K562 (cell line): ENCODE measurements at regions of chr6 and their contacts with region 1.

Region 1: GRCh38 chr6:107674995-107675738 is 148.9 kb downstream of the SCML4 start:
- DNase-seq: peak; percentile 76 to 79 (median 78)
- ATAC-seq: peak; percentile 98
- H3K4me3 ChIP-seq: no peak overlapping the region
- H3K27ac ChIP-seq: no peak overlapping the region
- H3K4me1 ChIP-seq: peaks cover 0 to 5% of the 10 kb centered on the region in 2 experiments; a peak in 2 of 5 replicates
- H3K27me3 ChIP-seq: peaks cover 16 to 39% of the 10 kb centered on the region in 2 experiments
- CTCF ChIP-seq: peak; percentile 88 to 93 (median 92)
- EP300 ChIP-seq: no peak
- POLR2A ChIP-seq: no peak
- RAD21 ChIP-seq: peak; percentile 79 to 91

Region 2: DNA sequence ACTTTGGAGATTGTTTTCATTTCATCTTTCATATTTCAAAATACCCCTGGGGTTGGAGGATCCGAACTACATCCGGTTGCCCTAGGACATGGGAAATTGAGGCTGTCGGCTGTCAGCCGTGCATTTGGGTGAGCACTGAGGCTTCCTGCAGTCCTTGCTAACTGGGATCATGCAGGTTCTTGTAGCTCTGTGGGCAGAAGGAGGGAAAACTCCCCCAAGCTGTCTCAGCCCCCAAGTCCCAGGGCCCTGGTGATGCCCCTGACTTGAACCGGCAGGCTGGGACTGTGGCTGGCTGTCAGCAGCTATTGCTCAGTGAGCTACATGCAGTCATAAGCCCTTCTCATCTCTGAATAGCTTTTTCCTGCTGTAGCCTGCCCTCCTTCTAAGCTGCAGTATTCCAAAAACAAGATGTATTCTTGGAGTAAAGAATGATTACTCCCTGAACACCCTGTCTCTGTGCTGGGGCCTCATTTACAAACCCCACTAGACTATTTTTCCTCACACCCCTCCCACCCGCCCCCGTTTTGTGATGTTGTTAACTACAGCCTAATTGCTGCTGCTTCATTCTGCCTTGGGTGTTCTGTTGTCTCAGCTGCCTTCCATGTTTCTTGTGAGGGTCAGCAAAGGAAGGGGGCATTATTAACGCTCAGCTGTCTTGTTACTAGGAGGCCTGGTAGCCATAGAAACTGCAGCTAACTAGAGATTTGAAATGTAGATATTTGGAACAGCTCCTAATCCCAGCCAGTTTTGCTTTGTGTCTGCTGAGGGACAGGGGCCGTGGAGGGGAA is 629.1 kb before region 1 on chr6:
- CTCF ChIA-PET with region 1: no interaction called
- POLR2A ChIA-PET with region 1: no interaction called
- in situ Hi-C with region 1: no loop called
- intact Hi-C with region 1: no loop called
- DNase-seq: no peak
- ATAC-seq: no peak
- H3K4me3 ChIP-seq: no peak overlapping the region
- H3K27ac ChIP-seq: no peak overlapping the region
- H3K4me1 ChIP-seq: no peaks in the 10 kb centered on the region; a peak in 1 of 5 replicates
- H3K27me3 ChIP-seq: no peaks in the 10 kb centered on the region
- CTCF ChIP-seq: no peak
- EP300 ChIP-seq: no peak
- POLR2A ChIP-seq: no peak
- RAD21 ChIP-seq: no peak

Region 3: GRCh38 chr6:107361753-107362604 is 313.2 kb before region 1 on chr6:
- CTCF ChIA-PET with region 1: no interaction called
- POLR2A ChIA-PET with region 1: no interaction called
- in situ Hi-C with region 1: no loop called
- intact Hi-C with region 1: no loop called
- DNase-seq: no peak
- ATAC-seq: no peak
- H3K4me3 ChIP-seq: no peak overlapping the region
- H3K27ac ChIP-seq: no peak overlapping the region
- H3K4me1 ChIP-seq: no peaks in the 10 kb centered on the region
- H3K27me3 ChIP-seq: no peaks in the 10 kb centered on the region
- CTCF ChIP-seq: no peak
- EP300 ChIP-seq: no peak
- POLR2A ChIP-seq: no peak
- RAD21 ChIP-seq: no peak

Region 4: GRCh38 chr6:107532706-107533105 is 142.5 kb before region 1 on chr6:
- CTCF ChIA-PET with region 1: no interaction called
- POLR2A ChIA-PET with region 1: no interaction called
- in situ Hi-C with region 1: no loop called
- intact Hi-C with region 1: no loop called
- DNase-seq: no peak
- ATAC-seq: no peak
- H3K4me3 ChIP-seq: no peak overlapping the region
- H3K27ac ChIP-seq: no peak overlapping the region
- H3K4me1 ChIP-seq: no peaks in the 10 kb centered on the region
- H3K27me3 ChIP-seq: peaks cover 8 to 13% of the 10 kb centered on the region in 2 experiments; a peak in 3 of 5 replicates
- CTCF ChIP-seq: no peak
- EP300 ChIP-seq: no peak
- POLR2A ChIP-seq: no peak
- RAD21 ChIP-seq: no peak

Region 5: GRCh38 chr6:107847844-107848802 is 173.0 kb after region 1 on chr6:
- CTCF ChIA-PET with region 1: interaction called, 4 read pairs
- POLR2A ChIA-PET with region 1: interaction called, 4 read pairs
- in situ Hi-C with region 1: no loop called
- intact Hi-C with region 1: loop called (anchors 1 kb)
- DNase-seq: peak; percentile 88 to 92 (median 90)
- ATAC-seq: peak; percentile 98
- H3K4me3 ChIP-seq: peak overlapping the region; percentile 30
- H3K27ac ChIP-seq: no peak overlapping the region
- H3K4me1 ChIP-seq: peaks cover 2 to 9% of the 10 kb centered on the region in 2 experiments; a peak in 3 of 5 replicates
- H3K27me3 ChIP-seq: peaks cover 4 to 20% of the 10 kb centered on the region in 2 experiments; a peak in 4 of 5 replicates
- CTCF ChIP-seq: peak; percentile 87 to 89 (median 89)
- EP300 ChIP-seq: no peak
- POLR2A ChIP-seq: peak; percentile 41; the same call in 1 of the 2 replicates
- RAD21 ChIP-seq: peak; percentile 76 to 81

Region 6: GRCh38 chr6:107866606-107867301 is 191.6 kb after region 1 on chr6:
- CTCF ChIA-PET with region 1: no interaction called
- POLR2A ChIA-PET with region 1: interaction called, 10 read pairs
- in situ Hi-C with region 1: no loop called
- intact Hi-C with region 1: loop called (anchors 5 kb)
- DNase-seq: peak in 2 of 4 experiments; percentile 31 to 47
- ATAC-seq: peak; percentile 80
- H3K4me3 ChIP-seq: no peak overlapping the region
- H3K27ac ChIP-seq: no peak overlapping the region
- H3K4me1 ChIP-seq: no peaks in the 10 kb centered on the region
- H3K27me3 ChIP-seq: no peaks in the 10 kb centered on the region
- CTCF ChIP-seq: peak; percentile 31 to 61 (median 58); a peak in 4 of 6 replicates
- EP300 ChIP-seq: no peak
- POLR2A ChIP-seq: no peak
- RAD21 ChIP-seq: peak in 1 of 2 experiments; percentile 56; a peak in 2 of 4 replicates

Region 7: GRCh38 chr6:107964671-107965340 is 289.6 kb after region 1 on chr6:
- CTCF ChIA-PET with region 1: no interaction called
- POLR2A ChIA-PET with region 1: no interaction called
- in situ Hi-C with region 1: no loop called
- intact Hi-C with region 1: loop called (anchors 10 kb)
- DNase-seq: peak; percentile 21 to 46 (median 44)
- ATAC-seq: peak; percentile 70
- H3K4me3 ChIP-seq: no peak overlapping the region
- H3K27ac ChIP-seq: no peak overlapping the region
- H3K4me1 ChIP-seq: peaks cover 0 to 8% of the 10 kb centered on the region in 2 experiments; a peak in 3 of 5 replicates
- H3K27me3 ChIP-seq: no peaks in the 10 kb centered on the region
- CTCF ChIP-seq: no peak
- EP300 ChIP-seq: no peak
- POLR2A ChIP-seq: no peak
- RAD21 ChIP-seq: no peak

Region 8: GRCh38 chr6:108039681-108040080 is 364.5 kb after region 1 on chr6:
- CTCF ChIA-PET with region 1: no interaction called
- POLR2A ChIA-PET with region 1: no interaction called
- in situ Hi-C with region 1: loop called (anchors 10 kb)
- intact Hi-C with region 1: loop called (anchors 10 kb)
- DNase-seq: no peak
- ATAC-seq: no peak
- H3K4me3 ChIP-seq: no peak overlapping the region
- H3K27ac ChIP-seq: no peak overlapping the region
- H3K4me1 ChIP-seq: no peaks in the 10 kb centered on the region; a peak in 1 of 5 replicates
- H3K27me3 ChIP-seq: no peaks in the 10 kb centered on the region
- CTCF ChIP-seq: no peak
- EP300 ChIP-seq: no peak
- POLR2A ChIP-seq: no peak
- RAD21 ChIP-seq: no peak

Region 9: DNA sequence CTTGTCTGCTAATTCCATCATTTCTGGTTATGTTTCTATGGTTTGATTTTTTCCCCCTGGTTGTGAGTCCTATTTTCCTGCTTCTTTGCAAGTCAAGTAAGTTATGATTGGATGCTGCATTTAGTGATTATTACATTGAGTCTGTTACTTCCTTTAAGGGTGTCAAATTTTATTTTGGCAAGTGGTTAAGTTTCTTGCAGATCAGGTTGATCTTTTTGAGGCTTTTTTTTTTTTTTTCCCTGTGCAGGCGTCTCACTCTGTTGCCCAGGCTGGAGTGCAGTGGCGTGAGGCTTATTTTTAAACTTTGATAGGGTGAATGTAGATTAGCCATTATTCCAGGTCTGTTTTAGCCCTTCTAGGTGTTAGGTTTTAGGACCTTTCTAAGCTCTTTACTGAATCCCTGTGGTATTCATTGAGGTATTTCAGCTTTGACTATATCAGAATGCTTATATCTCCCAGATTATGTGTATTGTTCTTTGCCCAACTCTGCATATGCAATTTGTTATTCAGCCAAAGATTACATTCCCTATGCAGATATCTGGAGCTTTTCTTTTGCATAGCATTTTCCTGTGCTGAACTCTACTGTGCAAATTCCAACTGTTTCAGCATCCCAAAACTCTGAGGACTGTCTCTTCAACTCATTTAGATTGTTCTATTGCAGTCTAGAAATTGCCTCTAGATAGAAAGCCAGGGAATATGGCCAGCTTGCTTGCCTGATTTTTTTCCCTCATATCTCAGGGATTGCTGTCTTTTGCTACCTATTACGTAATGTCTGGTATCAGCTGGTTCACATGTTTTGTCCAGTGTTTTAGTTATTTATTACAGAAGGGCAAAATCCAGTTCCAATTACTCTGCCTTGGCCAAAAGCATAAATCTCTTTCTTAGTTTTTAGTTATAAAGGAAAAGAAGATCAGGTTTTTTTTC is 733.0 kb after region 1 on chr6:
- CTCF ChIA-PET with region 1: no interaction called
- POLR2A ChIA-PET with region 1: no interaction called
- in situ Hi-C with region 1: no loop called
- intact Hi-C with region 1: no loop called
- DNase-seq: no peak
- ATAC-seq: no peak
- H3K4me3 ChIP-seq: no peak overlapping the region
- H3K27ac ChIP-seq: no peak overlapping the region
- H3K4me1 ChIP-seq: no peaks in the 10 kb centered on the region
- H3K27me3 ChIP-seq: no peaks in the 10 kb centered on the region
- CTCF ChIP-seq: no peak
- EP300 ChIP-seq: no peak
- POLR2A ChIP-seq: no peak
- RAD21 ChIP-seq: no peak